ENCODE measurements at regions of chr2 and their contacts with region 1.

Region 1: GRCh38 chr2:197705121-197705911 is at the start of gene MARS2:
- DNase-seq: peak; percentile 96
- ATAC-seq: peak; percentile 85
- H3K4me3 ChIP-seq: peak within 1 kb of the TSS; percentile 66 to 85 (median 80)
- H3K4me3 Mint-ChIP-seq: peak within 1 kb of the TSS; percentile 92
- H3K27ac ChIP-seq: peak within 1 kb of the TSS; percentile 80 to 85
- H3K27ac Mint-ChIP-seq: peak within 1 kb of the TSS; percentile 95
- H3K4me1 ChIP-seq: peaks cover 26 to 31% of the 10 kb centered on the region in 2 donors
- H3K4me1 Mint-ChIP-seq: peaks cover 45% of the 10 kb centered on the region
- H3K27me3 ChIP-seq: peaks cover 0 to 10% (median 0%) of the 10 kb centered on the region in 4 experiments
- H3K27me3 Mint-ChIP-seq: peaks cover 12% of the 10 kb centered on the region
- CTCF ChIP-seq: no peak
- total RNA-seq, gene MARS2: 10.5 and 12.0 TPM in 2 replicates

Region 2: DNA sequence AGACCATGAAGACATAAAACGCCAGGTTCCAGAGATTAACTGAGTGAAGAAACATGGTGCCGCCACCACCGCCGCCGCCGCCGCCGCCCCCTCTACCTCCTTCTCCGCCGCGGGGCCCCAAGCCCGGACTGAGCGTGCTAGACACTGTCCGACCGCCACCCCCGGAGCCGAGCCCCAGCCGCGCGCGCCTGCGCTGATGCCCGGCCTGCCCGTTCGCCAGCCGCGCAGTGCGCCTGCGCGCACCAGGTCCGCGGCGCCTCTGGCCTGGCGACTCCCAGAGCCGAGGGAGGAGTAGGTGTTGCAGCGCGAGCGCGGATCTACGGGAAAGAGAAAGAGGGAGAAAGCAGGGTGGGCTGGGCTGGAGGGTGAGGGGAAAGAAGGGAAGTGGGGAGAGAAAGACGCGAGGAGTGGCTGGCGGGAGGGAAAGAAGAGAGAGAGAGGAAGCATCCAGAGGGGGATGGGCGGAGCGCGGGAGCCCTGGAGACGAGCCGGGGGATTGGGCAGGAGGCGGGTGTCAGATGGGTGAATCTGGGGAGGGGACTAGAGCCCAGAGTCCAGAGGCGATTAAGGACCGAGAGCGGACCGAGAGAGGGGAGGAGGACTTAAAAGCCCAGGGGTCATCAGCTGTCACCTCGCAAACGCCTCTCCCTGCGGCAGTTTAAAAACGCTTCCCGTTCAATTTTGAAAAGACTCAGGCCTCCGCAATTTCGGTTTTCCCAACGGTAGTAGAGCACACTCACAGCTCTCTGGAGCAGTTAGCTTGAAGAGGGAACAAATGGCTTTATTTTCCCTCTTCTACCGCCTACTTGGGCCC is 778.5 kb before region 1 on chr2 and contains the start of gene PGAP1:
- CTCF ChIA-PET with region 1: no interaction called
- POLR2A ChIA-PET with region 1: no interaction called
- intact Hi-C with region 1: loop called (anchors 10 kb)
- DNase-seq: peak; percentile 88
- ATAC-seq: peak; percentile 91
- H3K4me3 ChIP-seq: peak within 1 kb of the TSS; percentile 76 to 89 (median 86)
- H3K4me3 Mint-ChIP-seq: peak within 1 kb of the TSS; percentile 90
- H3K27ac ChIP-seq: peak within 1 kb of the TSS; percentile 4 to 45
- H3K27ac Mint-ChIP-seq: peak within 1 kb of the TSS; percentile 73
- H3K4me1 ChIP-seq: peaks cover 10 to 14% of the 10 kb centered on the region in 2 donors
- H3K4me1 Mint-ChIP-seq: peaks cover 20% of the 10 kb centered on the region
- H3K27me3 ChIP-seq: peaks cover 0 to 8% (median 3%) of the 10 kb centered on the region in 4 experiments
- H3K27me3 Mint-ChIP-seq: peaks cover 16% of the 10 kb centered on the region
- CTCF ChIP-seq: no peak
- total RNA-seq, gene PGAP1: 21.8 and 22.9 TPM in 2 replicates

Region 3: GRCh38 chr2:197453161-197453914 is 252.0 kb before region 1 on chr2 and contains the start of gene COQ10B:
- CTCF ChIA-PET with region 1: no interaction called
- POLR2A ChIA-PET with region 1: interaction called, 3 read pairs
- intact Hi-C with region 1: loop called (anchors 1 kb)
- DNase-seq: peak; percentile 99
- ATAC-seq: peak; percentile 90
- H3K4me3 ChIP-seq: peak within 1 kb of the TSS; percentile 82 to 99 (median 89)
- H3K4me3 Mint-ChIP-seq: peak within 1 kb of the TSS; percentile 99
- H3K27ac ChIP-seq: peak within 1 kb of the TSS; percentile 95 to 96
- H3K27ac Mint-ChIP-seq: peak within 1 kb of the TSS; percentile 99
- H3K4me1 ChIP-seq: peaks cover 17 to 19% of the 10 kb centered on the region in 2 donors
- H3K4me1 Mint-ChIP-seq: peaks cover 42% of the 10 kb centered on the region
- H3K27me3 ChIP-seq: no peaks in the 10 kb centered on the region
- H3K27me3 Mint-ChIP-seq: no peaks in the 10 kb centered on the region
- CTCF ChIP-seq: no peak
- total RNA-seq, gene COQ10B: 29.1 and 29.6 TPM in 2 replicates

Region 4: DNA sequence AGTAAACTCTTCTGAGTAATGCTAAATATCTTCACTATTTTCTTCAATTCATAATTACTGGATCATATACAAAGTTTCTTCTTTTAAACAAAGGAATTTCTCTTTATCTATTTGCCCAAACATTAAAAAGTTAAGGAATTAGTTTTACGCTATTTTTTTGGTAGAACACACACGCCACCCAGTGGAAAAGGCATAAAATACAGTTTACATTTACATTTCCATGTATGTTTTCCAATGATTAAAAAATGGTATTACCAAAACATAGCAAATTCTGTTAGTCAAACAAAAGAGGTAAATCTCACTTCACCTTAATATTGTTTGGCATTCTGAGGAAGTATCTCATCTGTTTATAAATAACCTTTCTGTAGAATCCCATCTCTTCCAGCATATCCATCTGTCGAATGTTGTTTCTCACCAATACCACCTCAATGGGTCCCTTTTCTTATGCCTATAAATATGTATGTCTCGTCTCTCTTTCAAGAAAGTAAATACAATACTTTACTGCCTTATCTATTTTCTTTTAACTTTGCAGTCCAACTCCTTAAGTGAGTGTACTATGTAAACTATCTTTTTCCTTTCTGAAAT is 72.6 kb after region 1 on chr2:
- CTCF ChIA-PET with region 1: interaction called, 15 read pairs
- POLR2A ChIA-PET with region 1: no interaction called
- intact Hi-C with region 1: loop called (anchors 1 kb)
- DNase-seq: peak; percentile 46
- ATAC-seq: no peak
- H3K4me3 ChIP-seq: no peak overlapping the region
- H3K4me3 Mint-ChIP-seq: no peak overlapping the region
- H3K27ac ChIP-seq: no peak overlapping the region
- H3K27ac Mint-ChIP-seq: no peak overlapping the region
- H3K4me1 ChIP-seq: no peaks in the 10 kb centered on the region
- H3K4me1 Mint-ChIP-seq: no peaks in the 10 kb centered on the region
- H3K27me3 ChIP-seq: peaks cover 0 to 8% (median 0%) of the 10 kb centered on the region in 4 experiments
- H3K27me3 Mint-ChIP-seq: peaks cover 20% of the 10 kb centered on the region
- CTCF ChIP-seq: peak; percentile 89

Region 5: DNA sequence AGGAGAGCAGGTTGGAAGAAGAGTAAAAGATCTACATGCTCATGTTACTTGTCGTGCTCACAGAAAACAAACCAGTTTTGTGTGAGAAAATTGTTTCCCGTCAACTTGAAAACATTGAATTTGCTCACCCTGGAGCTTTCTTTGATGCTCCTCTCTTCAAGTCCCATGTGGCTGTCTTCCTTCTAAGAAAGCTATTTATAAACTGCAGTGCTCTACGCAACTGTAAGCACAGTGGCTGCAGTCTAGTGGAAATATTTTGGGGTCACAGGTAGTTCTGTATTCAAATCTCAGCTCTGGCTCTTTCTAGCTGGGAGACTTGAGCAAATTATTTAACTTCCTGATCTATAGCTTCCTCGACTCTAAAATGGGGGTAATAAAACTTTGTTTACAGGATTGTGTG is 310.9 kb after region 1 on chr2:
- CTCF ChIA-PET with region 1: no interaction called
- POLR2A ChIA-PET with region 1: no interaction called
- intact Hi-C with region 1: no loop called
- DNase-seq: no peak
- ATAC-seq: no peak
- H3K4me3 ChIP-seq: no peak overlapping the region
- H3K4me3 Mint-ChIP-seq: no peak overlapping the region
- H3K27ac ChIP-seq: no peak overlapping the region
- H3K27ac Mint-ChIP-seq: no peak overlapping the region
- H3K4me1 ChIP-seq: no peaks in the 10 kb centered on the region
- H3K4me1 Mint-ChIP-seq: no peaks in the 10 kb centered on the region
- H3K27me3 ChIP-seq: no peaks in the 10 kb centered on the region
- H3K27me3 Mint-ChIP-seq: peaks cover 3% of the 10 kb centered on the region
- CTCF ChIP-seq: no peak

Measured in B cell (primary cell).